HEK293 (cell line): ENCODE measurements at regions of chr20 and their contacts with region 1.

Region 1: DNA sequence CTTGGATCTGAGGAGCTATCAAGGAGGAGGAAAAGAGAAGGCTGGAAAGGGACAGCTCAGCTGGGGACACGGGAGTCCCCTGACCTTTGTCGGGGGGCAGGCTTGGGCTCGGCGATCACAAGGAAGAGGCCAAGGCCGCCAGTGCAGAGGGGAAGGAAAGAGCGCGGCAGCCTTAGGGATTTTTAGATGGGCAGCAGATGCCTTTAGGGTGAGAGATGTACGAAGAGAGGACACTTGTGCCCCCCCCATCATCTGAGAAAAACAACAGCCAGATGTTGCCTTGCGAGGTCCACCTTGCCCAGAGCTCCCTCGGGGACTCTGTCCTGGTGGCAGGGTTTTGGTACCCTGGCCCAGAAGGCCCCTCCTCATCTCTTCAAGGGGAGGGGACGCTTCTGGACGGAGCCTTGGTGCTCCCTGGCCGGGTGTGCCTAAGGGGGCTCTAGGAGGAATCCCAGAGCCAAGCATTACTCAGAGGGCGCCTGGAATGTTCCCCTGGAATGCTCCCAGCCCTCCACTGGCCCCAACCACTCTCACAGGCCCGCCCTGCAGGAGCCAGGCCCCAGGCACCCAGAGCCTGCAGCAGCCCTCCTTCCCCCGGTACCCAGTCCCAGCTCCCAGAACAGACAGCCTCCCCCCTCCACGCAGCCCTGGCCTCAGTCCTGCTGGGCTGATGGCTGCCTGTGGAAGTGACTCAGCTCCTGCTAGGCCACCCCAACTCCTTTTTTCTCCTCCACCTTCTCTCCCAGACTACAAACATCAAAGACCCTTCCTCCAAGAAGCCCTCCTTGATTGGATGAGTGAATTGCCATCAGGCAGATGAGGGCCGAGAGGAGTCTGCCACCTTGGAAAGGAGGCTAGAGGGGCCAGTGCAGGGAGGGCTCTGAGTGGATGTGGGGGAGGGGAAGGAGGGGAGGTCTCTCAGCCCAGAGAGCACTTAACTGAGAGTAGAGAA is 1.8 kb downstream of the ADAM33 start:
- H3K4me3 ChIP-seq: no peak overlapping the region
- H3K27ac ChIP-seq: no peak overlapping the region
- H3K4me1 ChIP-seq: 0 out of 2 replicates have a peak, but pooled peaks cover 2% of the 10 kb centered on the region
- CTCF ChIP-seq: no peak

Region 2: GRCh38 chr20:3563548-3564177 is 116.4 kb before region 1 on chr20:
- CTCF ChIA-PET with region 1: interaction called, 17 read pairs
- POLR2A ChIA-PET with region 1: no interaction called
- H3K4me3 ChIP-seq: no peak overlapping the region
- H3K27ac ChIP-seq: no peak overlapping the region
- H3K4me1 ChIP-seq: no peaks in the 10 kb centered on the region
- CTCF ChIP-seq: peak; percentile 60

Region 3: GRCh38 chr20:3646651-3647050 is 33.4 kb before region 1 on chr20:
- CTCF ChIA-PET with region 1: interaction called, 10 read pairs
- POLR2A ChIA-PET with region 1: no interaction called
- H3K4me3 ChIP-seq: no peak overlapping the region
- H3K27ac ChIP-seq: no peak overlapping the region
- H3K4me1 ChIP-seq: no peaks in the 10 kb centered on the region
- CTCF ChIP-seq: no peak

Region 4: GRCh38 chr20:3696200-3696599 is 16.2 kb after region 1 on chr20:
- CTCF ChIA-PET with region 1: interaction called, 28 read pairs
- POLR2A ChIA-PET with region 1: no interaction called
- H3K4me3 ChIP-seq: no peak overlapping the region
- H3K27ac ChIP-seq: no peak overlapping the region
- H3K4me1 ChIP-seq: no peaks in the 10 kb centered on the region
- CTCF ChIP-seq: no peak

Region 5: DNA sequence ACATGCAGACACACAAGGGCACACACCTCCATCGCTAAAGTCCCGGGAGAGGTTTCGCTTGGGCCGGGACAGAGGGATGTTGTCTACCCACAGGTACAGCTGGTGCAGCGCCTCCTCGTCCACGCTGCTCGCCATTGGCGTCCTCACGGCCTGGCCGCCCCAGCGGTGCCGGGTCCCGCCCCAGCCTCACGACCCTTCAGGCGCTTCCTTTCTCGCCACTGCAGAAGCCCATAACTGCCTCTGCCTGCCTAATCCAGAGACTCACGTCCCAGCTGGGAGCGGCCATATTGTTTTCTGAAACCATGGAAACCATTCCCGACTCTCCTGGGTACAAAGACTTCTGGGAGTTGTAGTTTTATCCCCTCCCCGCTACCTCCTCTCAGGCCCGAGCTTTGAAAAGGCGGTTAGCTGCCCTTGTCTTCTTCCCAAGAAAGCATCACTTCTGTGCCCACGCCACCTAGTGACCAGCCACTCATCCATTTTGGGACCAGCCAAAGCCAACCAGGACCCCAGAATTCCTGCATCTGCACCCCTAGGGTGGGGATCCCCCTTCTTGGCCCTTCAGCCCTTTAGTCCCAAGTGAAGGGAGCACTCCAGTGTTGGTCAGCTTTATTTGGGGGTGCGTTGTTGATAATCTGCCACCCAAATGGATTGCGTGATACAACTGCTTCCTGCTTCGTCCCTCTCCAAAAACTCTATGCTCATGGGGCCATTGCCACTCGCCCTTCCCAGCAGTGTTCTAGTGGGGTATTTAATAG is 101.3 kb after region 1 on chr20 and contains the start of gene SPEF1:
- CTCF ChIA-PET with region 1: interaction called, 12 read pairs
- POLR2A ChIA-PET with region 1: no interaction called
- H3K4me3 ChIP-seq: peak within 1 kb of the TSS; percentile 41
- H3K27ac ChIP-seq: no peak within 1 kb of the TSS
- H3K4me1 ChIP-seq: peaks cover 13% of the 10 kb centered on the region; the same call in 1 of the 2 replicates
- CTCF ChIP-seq: peak; percentile 86